Activated CD4-positive, alpha-beta memory T cell treated with anti-CD3 and anti-CD28 coated beads, Interleukin-2, amount 10 ng/mL, durations not matched to agents 7 days and 5 days (primary cell): ENCODE measurements at regions of chr6 and their contacts with region 1.

Region 1: GRCh38 chr6:159761873-159762680 is at the start of gene ACAT2:
- DNase-seq: peak; percentile 95
- H3K4me3 Mint-ChIP-seq: peak within 1 kb of the TSS; percentile 84
- H3K27ac Mint-ChIP-seq: peak within 1 kb of the TSS; percentile 96
- H3K4me1 Mint-ChIP-seq: peaks cover 44% of the 10 kb centered on the region
- H3K27me3 Mint-ChIP-seq: no peaks in the 10 kb centered on the region
- total RNA-seq, gene ACAT2: 98.0 to 109 TPM

Region 2: GRCh38 chr6:159739341-159739740 is 22.7 kb before region 1 on chr6:
- CTCF ChIA-PET with region 1: interaction called, 3 read pairs
- POLR2A ChIA-PET with region 1: interaction called, 17 read pairs
- DNase-seq: no peak
- H3K4me3 Mint-ChIP-seq: no peak overlapping the region
- H3K27ac Mint-ChIP-seq: no peak overlapping the region
- H3K4me1 Mint-ChIP-seq: peaks cover 17% of the 10 kb centered on the region
- H3K27me3 Mint-ChIP-seq: no peaks in the 10 kb centered on the region